ENCODE measurements at regions of chr22 and their contacts with region 1.

Region 1: DNA sequence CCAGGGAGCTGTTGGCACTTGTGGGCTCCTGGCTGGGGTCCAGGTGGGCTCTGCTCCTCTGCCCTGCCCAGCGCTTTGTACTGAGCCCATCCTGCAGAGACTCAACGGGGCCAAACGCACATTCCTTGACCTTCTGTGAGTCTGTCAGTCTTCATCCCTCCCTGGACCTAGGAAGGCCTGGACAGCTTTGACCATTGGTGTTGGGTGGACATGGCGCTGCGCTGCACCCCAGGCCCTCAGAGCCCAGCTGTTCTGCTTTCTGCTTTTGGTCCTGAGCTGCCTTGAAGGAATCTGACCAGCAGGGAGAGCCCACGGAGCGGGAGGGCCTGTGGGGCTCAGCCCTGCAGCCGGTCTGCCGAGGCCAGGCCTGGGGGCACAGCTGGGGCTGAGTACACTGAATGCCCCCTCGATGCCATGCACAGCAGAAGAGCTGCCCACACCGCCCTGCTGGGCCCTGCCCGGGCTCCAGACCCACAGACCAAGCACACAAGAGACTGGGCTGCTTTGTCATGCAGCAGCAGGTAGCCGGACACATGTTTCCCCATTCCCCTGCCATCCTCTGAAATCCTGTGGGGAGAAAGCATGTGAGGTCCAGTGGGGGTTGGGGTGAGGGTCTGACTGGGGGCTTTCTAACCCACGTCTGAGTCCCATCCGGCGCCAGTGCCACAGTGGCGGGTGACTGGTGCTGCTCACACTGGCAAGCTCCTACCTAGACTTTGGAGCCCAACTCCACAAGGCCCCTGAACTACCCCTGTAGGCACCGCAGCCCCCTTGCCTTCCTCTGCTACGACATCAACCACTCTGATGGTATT is 24.1 kb upstream of the CCDC188 start:
- DNase-seq: no peak
- ATAC-seq: peak; percentile 67
- H3K4me3 Mint-ChIP-seq: no peak overlapping the region
- H3K27ac Mint-ChIP-seq: no peak overlapping the region
- H3K4me1 Mint-ChIP-seq: no peaks in the 10 kb centered on the region
- H3K27me3 Mint-ChIP-seq: no peaks in the 10 kb centered on the region
- CTCF ChIP-seq: no peak

Region 2: DNA sequence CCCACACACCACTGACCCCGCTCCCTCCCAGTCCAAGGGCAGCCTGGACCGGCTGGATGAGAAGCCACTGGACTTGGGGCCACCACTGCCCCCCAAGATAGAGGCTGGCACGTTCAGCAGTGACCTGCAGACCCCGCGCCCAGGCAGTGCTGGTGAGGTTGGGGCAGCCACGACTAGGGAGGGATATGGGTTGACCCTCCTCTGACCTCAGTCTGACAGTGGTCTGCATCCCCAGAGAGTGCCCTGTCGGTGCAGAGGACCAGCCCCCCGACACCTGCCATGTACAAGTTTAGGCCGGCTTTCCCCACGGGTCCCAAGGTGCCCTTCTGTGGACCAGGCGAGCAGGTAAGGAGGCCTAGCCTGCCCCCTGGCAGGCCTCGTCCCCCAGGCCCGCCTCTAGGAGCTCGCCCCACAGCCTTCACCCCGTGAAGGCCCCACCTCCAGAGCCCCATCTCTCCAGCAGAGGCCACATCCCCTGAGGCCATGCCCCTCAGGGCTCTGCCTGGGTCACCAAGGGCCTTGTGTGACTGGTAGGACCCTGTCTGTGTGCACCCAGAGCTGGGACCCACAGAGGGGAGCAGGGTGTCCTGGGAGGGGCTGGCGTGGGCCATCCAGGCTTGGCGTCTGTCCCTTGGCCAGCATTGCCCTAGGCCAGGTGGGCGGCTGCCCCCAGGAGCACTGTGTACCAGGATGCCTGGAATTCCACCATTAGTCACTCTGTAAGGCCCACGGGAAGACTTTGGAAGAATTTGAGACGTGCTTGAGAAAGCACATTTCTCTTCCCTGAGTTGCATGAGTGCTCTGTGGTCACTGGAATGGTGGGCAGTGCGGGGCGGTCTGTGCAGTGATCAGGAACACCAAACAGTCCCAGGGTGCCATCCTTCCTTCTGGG is 33.6 kb before region 1 on chr22:
- CTCF ChIA-PET with region 1: no interaction called
- POLR2A ChIA-PET with region 1: no interaction called
- DNase-seq: no peak
- ATAC-seq: no peak
- H3K4me3 Mint-ChIP-seq: no peak overlapping the region
- H3K27ac Mint-ChIP-seq: no peak overlapping the region
- H3K4me1 Mint-ChIP-seq: no peaks in the 10 kb centered on the region
- H3K27me3 Mint-ChIP-seq: no peaks in the 10 kb centered on the region
- CTCF ChIP-seq: no peak

Region 3: DNA sequence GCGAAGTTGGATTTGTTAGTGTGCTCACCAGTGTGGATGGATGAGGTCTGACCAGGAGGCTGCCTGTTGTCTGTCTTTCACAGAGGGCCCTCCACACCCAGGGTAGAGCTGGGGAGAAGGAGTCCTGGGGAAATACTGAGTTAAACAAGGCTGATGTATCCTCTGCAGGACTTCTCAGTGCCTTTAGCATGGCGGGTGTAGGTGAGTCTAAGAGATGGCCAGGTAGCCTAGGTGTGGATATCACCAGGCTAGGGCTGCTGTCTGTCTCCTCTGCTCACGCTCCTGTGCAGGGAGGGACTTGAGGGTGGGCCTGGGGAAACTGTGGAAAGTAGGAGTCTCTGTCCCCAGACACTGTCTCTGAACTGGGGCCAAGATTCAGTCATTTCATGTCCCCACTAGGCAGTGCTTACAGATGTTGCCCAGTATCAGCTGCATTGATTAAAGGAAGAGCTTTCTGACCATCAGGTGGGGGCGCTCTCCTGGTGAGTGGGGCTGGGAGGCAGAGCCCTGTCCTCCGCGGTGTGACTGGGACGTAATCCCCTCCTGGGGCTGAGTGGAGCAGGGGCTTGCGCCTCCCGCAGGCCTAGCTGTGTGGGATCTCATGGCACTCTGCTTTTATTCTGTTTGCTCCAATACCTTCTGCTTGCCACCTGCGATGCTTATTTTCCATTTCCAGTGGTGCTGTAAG is 11.3 kb after region 1 on chr22:
- CTCF ChIA-PET with region 1: interaction called, 19 read pairs
- POLR2A ChIA-PET with region 1: no interaction called
- DNase-seq: peak; percentile 81
- ATAC-seq: peak; percentile 95
- H3K4me3 Mint-ChIP-seq: no peak overlapping the region
- H3K27ac Mint-ChIP-seq: no peak overlapping the region
- H3K4me1 Mint-ChIP-seq: no peaks in the 10 kb centered on the region
- H3K27me3 Mint-ChIP-seq: no peaks in the 10 kb centered on the region
- CTCF ChIP-seq: no peak

Region 4: DNA sequence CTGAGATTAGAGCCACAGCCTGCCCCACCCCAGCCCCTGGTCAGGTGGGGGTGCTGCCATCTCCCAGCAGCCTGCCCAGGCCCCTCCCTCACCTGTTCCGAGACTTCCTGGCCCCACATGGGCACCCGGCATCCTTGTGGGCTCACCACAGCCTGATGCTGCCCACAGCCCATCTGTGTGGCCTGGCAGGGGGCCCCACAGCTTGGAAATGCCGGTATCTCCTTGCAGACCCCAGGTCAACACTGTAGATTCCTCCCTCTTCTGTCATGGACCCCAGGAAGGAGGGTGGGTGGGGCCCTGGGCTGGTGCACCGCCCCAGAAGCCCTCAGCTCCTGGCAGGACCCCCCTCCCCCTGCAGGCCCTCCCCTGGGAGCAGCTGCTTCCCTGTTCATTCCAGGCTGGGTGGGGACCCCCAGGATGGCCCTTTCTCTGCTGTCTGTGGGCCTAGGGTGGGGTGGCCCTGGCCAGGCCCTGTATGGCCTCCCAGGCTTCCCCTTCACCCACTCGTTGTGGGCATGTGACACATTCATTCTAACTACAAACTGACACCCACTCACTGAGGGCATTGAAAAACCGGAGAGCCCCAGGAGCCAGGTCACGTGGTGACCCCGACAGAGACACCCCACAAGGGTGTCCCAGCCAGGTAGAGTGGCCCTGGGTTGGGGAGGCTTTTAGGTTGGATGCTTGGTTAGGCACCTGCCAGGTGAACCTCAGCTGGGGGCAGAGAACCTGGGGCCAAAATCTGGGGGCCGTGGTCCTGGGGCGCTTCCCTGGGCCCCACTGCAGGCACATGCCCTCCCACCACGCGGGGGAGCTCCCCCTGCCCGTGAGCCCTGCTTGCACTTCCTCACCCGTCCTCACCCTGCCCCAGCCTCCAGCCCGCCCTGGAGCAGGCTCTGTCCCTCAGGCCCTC is 19.9 kb after region 1 on chr22:
- CTCF ChIA-PET with region 1: interaction called, 25 read pairs
- POLR2A ChIA-PET with region 1: no interaction called
- DNase-seq: no peak
- ATAC-seq: peak; percentile 60; the same call in 1 of the 2 replicates
- H3K4me3 Mint-ChIP-seq: no peak overlapping the region
- H3K27ac Mint-ChIP-seq: no peak overlapping the region
- H3K4me1 Mint-ChIP-seq: no peaks in the 10 kb centered on the region
- H3K27me3 Mint-ChIP-seq: no peaks in the 10 kb centered on the region
- CTCF ChIP-seq: no peak

Region 5: GRCh38 chr22:20205964-20206708 is 31.1 kb after region 1 on chr22:
- CTCF ChIA-PET with region 1: interaction called, 15 read pairs
- POLR2A ChIA-PET with region 1: no interaction called
- DNase-seq: no peak
- ATAC-seq: peak; percentile 52
- H3K4me3 Mint-ChIP-seq: peak overlapping the region; percentile 38
- H3K27ac Mint-ChIP-seq: peak overlapping the region; percentile 82
- H3K4me1 Mint-ChIP-seq: peaks cover 33% of the 10 kb centered on the region
- H3K27me3 Mint-ChIP-seq: no peaks in the 10 kb centered on the region
- CTCF ChIP-seq: no peak

Region 6: GRCh38 chr22:20216863-20217499 is 42.0 kb after region 1 on chr22:
- CTCF ChIA-PET with region 1: no interaction called
- POLR2A ChIA-PET with region 1: no interaction called
- DNase-seq: no peak
- ATAC-seq: no peak
- H3K4me3 Mint-ChIP-seq: no peak overlapping the region
- H3K27ac Mint-ChIP-seq: no peak overlapping the region
- H3K4me1 Mint-ChIP-seq: no peaks in the 10 kb centered on the region
- H3K27me3 Mint-ChIP-seq: no peaks in the 10 kb centered on the region
- CTCF ChIP-seq: no peak